ENCODE measurements at regions of chr9 and their contacts with region 1.

Region 1: DNA sequence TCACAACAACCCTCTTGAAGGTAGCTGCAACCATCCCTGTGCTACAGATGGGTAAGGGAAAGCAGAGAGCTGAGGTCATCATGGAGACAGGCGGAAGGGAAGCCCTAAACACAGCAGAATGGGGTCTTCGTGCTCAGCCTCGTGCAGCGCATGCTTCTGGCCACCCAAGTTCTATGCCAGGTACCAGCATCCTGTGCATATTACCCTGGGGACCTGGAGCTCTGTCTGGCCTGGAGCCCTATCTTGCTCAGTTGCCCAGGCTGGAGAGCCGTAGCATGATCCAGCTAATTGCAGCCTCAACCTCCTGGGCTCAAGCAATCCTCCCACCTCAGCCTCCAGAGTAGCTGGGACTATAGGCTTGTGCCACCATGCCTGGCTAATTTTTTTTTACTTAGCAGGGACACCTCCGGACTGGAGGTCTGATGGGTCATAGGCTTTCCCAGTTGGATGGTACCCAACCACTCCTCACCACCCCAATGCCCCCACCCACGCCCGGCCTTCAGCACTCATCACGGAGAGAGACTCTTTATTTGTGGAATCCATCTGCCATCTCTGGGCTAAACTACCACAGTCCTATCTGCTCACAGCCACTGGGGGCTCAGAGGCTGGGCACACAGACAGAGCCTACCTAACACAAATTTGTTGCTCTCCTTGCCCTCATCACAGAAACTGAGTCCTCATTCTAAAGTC is 58.4 kb upstream of the STXBP1 start:
- DNase-seq: no peak
- ATAC-seq: no peak
- H3K4me3 ChIP-seq: no peak overlapping the region
- H3K27ac ChIP-seq: peak overlapping the region; percentile 18; the same call in 1 of the 2 replicates
- H3K4me1 ChIP-seq: peaks cover 43% of the 10 kb centered on the region
- H3K27me3 ChIP-seq: no peaks in the 10 kb centered on the region
- CTCF ChIP-seq: no peak

Region 2: DNA sequence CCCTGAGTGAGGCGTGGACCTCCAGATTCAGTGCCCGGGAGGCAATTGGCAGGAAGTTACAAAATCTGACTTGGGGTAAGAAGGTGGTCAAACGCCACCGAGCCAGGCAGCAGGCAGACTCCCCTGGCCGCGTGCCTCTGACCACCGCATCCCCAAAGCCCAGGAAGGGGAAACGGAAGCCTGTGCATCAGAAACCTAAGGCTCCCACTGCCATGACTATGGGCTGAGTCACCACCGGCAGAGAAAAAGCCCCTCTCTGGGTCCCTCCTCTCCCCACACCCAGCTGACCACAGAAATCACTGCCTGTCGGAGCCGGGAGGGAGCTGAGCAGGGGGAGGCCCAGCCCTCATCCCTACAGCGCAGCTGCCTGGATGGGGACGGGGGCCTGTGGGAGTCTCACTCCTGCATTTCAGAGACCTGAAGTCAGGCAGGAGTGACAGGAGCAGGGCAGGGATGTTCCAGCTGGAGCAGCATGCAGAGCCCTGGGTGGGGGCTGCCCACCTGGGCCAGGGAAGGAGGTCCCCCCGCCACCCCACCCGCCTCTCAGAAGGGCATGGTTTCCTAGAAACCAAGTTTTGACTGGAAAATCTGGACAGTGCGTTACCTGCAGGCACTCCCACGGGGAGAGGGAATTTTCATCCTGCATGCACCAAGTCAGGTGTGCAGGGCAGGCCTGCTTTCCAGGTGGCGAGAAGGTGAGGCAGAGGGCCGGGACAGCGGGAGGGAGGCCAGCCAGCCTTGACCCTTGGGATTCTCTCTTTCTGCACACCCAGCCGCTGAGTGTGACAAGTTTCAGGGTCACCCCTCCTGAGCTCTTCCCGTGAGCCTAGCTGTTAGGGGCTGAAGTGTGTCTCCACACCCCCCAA is 34.1 kb before region 1 on chr9:
- CTCF ChIA-PET with region 1: interaction called, 11 read pairs
- POLR2A ChIA-PET with region 1: interaction called, 3 read pairs
- in situ Hi-C with region 1: no loop called
- intact Hi-C with region 1: no loop called
- DNase-seq: no peak
- ATAC-seq: peak; percentile 79
- H3K4me3 ChIP-seq: no peak overlapping the region
- H3K27ac ChIP-seq: peak overlapping the region; percentile 87
- H3K4me1 ChIP-seq: peaks cover 35% of the 10 kb centered on the region
- H3K27me3 ChIP-seq: no peaks in the 10 kb centered on the region
- CTCF ChIP-seq: no peak

Region 3: DNA sequence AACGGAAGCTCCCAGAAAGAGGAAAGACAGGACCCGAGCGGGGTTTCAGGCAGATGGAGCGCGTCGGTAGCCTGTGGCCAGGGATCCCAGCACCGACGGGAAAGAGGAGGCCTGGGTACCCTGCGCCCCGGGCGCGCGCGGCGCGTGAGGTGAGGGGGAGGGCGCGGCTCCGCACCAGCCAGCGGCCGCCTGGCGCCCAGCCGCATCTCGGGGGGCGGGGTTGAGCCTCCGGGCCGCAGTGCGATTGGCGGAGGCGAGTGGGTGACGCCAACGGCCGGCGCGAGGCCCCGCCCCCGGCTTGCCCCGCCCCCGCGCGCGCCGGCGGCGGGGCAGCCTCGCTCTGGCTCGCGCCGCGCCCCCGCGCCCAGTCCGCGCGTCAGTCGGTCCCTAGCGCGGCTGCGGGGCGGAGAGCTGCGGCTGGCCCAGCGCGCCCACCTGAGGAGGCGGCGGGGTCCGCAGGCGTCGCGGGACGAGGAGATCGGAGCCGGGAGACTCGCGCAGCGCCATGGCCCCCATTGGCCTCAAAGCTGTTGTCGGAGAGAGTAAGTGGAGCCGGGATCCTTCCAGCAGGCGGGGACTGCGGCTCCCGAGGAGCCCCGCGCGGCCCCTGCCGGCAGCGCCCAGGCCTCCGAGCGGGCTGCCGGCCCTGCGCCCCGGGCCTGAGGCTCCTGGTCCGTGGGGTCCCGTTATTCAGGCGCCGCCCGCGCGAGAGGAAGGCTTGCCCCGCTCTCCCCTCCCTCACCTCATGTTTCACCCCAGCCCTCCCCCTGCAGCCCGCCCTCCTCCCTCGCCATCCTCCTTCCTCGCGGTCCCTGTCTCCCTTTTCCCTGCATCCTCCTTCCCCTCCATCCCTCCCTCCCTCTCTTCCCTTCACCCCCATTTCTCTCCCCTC is 58.5 kb after region 1 on chr9 and contains the start of gene STXBP1:
- CTCF ChIA-PET with region 1: no interaction called
- POLR2A ChIA-PET with region 1: no interaction called
- in situ Hi-C with region 1: no loop called
- intact Hi-C with region 1: no loop called
- DNase-seq: no peak
- ATAC-seq: peak; percentile 88
- H3K4me3 ChIP-seq: peak within 1 kb of the TSS; percentile 71 to 72
- H3K27ac ChIP-seq: peak within 1 kb of the TSS; percentile 88
- H3K4me1 ChIP-seq: peaks cover 27% of the 10 kb centered on the region
- H3K27me3 ChIP-seq: no peaks in the 10 kb centered on the region
- CTCF ChIP-seq: no peak
- total RNA-seq, gene STXBP1: 67.5 TPM

Measured in Panc1 (cell line).